ENCODE measurements at regions of chr19 and their contacts with region 1.

Region 1: GRCh38 chr19:10960314-10961072 is at the start of gene SMARCA4:
- DNase-seq: peak; percentile 96
- H3K4me3 Mint-ChIP-seq: peak within 1 kb of the TSS; percentile 86
- H3K27ac Mint-ChIP-seq: peak within 1 kb of the TSS; percentile 92
- H3K4me1 Mint-ChIP-seq: no peaks in the 10 kb centered on the region
- H3K27me3 Mint-ChIP-seq: no peaks in the 10 kb centered on the region
- CTCF ChIP-seq: no peak
- total RNA-seq, gene SMARCA4: 127 and 132 TPM in 2 replicates

Region 2: GRCh38 chr19:10907925-10908324 is 52.6 kb before region 1 on chr19:
- CTCF ChIA-PET with region 1: no interaction called
- POLR2A ChIA-PET with region 1: no interaction called
- intact Hi-C with region 1: no loop called
- DNase-seq: no peak
- H3K4me3 Mint-ChIP-seq: no peak overlapping the region
- H3K27ac Mint-ChIP-seq: no peak overlapping the region
- H3K4me1 Mint-ChIP-seq: no peaks in the 10 kb centered on the region
- H3K27me3 Mint-ChIP-seq: no peaks in the 10 kb centered on the region
- CTCF ChIP-seq: no peak

Region 3: GRCh38 chr19:10928525-10929401 is 31.7 kb before region 1 on chr19 and contains the starts of genes TIMM29 and YIPF2:
- CTCF ChIA-PET with region 1: no interaction called
- POLR2A ChIA-PET with region 1: interaction called, 14 read pairs
- intact Hi-C with region 1: no loop called
- DNase-seq: peak; percentile 100
- H3K4me3 Mint-ChIP-seq: peak within 1 kb of the TSS; percentile 95
- H3K27ac Mint-ChIP-seq: peak within 1 kb of the TSS; percentile 85
- H3K4me1 Mint-ChIP-seq: no peaks in the 10 kb centered on the region
- H3K27me3 Mint-ChIP-seq: no peaks in the 10 kb centered on the region
- CTCF ChIP-seq: no peak
- total RNA-seq, gene TIMM29: 18.3 and 19.3 TPM in 2 replicates
- total RNA-seq, gene YIPF2: 65.5 and 75.3 TPM in 2 replicates

Region 4: DNA sequence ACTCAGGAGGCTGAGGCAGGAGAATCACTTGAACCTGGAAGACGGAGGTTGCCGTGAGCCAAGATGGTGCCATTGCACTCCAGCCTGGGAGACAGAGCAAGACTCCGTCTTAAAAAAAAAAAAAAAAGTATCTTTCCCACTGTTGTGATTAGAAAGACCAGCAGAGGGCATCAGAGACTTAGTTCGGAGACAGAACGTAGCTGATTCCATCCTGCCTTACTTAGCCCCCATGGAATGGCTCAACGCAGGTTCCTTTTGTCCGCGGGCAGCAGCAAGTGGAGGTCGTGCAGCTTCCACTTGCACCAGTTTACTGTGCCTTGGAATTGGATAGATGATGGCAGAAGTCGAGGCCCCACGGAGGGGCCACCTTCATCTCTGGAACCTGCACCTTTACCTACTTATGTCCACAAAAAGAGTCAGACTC is 23.8 kb before region 1 on chr19:
- CTCF ChIA-PET with region 1: interaction called, 54 read pairs
- POLR2A ChIA-PET with region 1: interaction called, 30 read pairs
- intact Hi-C with region 1: no loop called
- DNase-seq: peak; percentile 84
- H3K4me3 Mint-ChIP-seq: no peak overlapping the region
- H3K27ac Mint-ChIP-seq: no peak overlapping the region
- H3K4me1 Mint-ChIP-seq: no peaks in the 10 kb centered on the region
- H3K27me3 Mint-ChIP-seq: no peaks in the 10 kb centered on the region
- CTCF ChIP-seq: peak; percentile 55

Region 5: DNA sequence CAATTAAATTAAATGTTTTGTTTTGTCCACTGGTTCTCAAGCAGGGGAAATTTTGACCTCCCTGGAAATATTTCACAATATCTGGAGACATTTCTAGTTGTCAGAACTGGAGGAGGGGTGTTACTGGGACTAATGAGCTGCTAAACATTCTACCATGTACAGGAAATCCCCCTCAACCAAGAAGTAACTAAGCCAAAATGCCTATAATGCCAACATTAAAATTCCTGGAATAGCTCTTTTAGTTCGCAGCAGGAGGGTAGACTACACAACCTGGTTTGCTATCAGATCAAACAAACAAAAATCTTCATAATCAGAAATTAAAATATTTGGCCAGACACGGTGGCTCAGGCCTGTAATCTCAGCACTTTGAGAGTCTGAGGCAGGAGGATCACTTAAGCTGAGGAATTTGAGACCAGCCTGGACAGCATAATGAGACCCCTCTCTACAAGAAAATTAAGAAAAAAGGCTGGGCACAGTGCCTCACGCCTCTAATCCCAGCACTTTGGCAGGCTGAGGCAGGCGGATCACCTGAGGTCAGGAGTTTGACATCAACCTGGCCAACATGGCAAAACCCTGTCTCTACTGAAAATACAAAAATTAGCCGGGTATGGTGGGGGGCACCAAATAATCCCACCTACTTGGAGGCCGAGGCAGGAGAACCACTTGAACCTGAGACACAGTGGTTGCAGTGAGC is 13.4 kb before region 1 on chr19:
- CTCF ChIA-PET with region 1: interaction called, 54 read pairs
- POLR2A ChIA-PET with region 1: interaction called, 30 read pairs
- intact Hi-C with region 1: loop called (anchors 2 kb)
- DNase-seq: peak; percentile 47
- H3K4me3 Mint-ChIP-seq: no peak overlapping the region
- H3K27ac Mint-ChIP-seq: peak overlapping the region; percentile 61
- H3K4me1 Mint-ChIP-seq: no peaks in the 10 kb centered on the region
- H3K27me3 Mint-ChIP-seq: no peaks in the 10 kb centered on the region
- CTCF ChIP-seq: no peak

Measured in MCF 10A (cell line).